Panc1 (cell line): ENCODE measurements at regions of chr3 and their contacts with region 1.

Region 1: DNA sequence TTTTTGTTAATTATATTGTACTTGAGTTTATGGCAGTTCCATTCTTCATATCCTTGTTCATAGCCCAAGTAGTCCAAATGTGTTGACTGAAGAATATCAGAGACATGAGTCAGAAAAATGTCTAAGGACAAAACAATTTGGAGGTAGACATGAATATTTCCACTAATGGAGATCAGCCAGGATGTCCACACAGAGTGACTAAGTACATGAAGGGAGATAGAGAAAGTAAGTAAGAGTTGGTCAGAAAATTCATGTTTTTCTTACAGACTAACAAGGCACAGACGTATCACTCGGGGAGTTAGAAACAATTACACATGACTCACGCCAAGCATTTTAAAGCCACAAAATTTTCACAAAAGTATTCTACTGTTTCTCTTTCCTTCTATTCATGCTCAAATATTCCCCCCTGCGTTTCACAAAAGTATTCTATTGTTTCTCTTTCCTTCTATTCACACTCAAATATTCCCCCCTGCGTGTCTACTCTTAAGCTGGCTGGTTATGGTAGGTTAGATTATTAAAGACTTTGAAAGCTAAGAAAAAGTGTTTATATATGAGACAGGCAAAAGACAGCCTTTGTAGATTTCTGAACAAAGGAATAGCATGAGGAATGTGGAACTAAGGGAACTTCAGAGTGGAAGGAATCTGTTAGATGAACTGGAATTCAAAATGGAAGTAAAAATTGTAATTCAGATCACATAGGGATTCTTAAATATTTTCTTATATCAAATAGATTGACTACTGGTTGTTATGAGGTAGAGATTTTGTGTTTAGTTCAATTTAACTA is 648.7 kb upstream of the CCDC54 start:
- DNase-seq: peak; percentile 72
- ATAC-seq: peak; percentile 87
- H3K4me3 ChIP-seq: no peak overlapping the region
- H3K27ac ChIP-seq: no peak overlapping the region
- H3K4me1 ChIP-seq: no peaks in the 10 kb centered on the region
- H3K27me3 ChIP-seq: no peaks in the 10 kb centered on the region
- CTCF ChIP-seq: no peak

Region 2: DNA sequence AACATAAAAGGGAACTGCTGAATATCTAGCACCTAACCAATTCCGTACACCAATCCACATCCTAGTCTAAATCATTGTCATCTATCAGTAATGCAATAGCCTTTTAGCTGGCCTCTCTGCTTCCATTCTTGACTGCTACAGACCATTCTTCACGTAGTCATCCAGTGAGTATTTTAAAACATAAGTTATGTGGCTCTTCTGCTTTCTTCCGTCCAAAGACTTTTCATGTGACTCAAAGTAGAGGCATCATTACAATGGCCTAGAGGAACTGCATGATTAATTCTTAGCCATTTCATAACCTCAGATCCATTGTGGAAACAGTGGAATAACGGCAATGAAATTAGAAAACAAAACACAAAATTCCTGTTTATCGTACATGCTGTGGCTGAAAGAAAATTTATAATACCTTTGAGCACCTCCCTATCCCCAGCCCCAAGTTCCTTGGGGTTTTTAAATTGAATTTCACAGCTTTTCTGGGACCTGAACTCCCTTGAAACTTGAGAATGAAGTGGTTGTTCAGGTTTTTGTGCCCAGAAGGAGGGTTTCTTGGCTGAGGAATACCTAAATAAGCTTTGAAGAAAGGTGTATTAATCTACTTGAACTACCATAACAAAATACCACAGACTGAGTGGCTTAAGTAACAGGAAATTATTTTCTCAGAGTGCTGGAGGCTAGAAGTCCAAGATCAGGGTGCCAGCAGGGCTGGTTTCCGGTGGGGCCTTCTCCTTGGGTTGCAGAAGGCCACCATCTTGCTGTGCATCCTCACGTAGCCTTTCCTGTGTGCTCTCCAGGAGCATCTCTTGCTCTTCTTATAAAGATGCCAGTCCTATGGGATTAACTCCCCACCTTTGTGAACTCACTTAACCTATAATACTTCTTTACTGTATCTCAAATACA is 770.5 kb before region 1 on chr3:
- CTCF ChIA-PET with region 1: no interaction called
- POLR2A ChIA-PET with region 1: no interaction called
- in situ Hi-C with region 1: no loop called
- intact Hi-C with region 1: no loop called
- DNase-seq: no peak
- ATAC-seq: no peak
- H3K4me3 ChIP-seq: no peak overlapping the region
- H3K27ac ChIP-seq: no peak overlapping the region
- H3K4me1 ChIP-seq: no peaks in the 10 kb centered on the region
- H3K27me3 ChIP-seq: no peaks in the 10 kb centered on the region
- CTCF ChIP-seq: no peak

Region 3: DNA sequence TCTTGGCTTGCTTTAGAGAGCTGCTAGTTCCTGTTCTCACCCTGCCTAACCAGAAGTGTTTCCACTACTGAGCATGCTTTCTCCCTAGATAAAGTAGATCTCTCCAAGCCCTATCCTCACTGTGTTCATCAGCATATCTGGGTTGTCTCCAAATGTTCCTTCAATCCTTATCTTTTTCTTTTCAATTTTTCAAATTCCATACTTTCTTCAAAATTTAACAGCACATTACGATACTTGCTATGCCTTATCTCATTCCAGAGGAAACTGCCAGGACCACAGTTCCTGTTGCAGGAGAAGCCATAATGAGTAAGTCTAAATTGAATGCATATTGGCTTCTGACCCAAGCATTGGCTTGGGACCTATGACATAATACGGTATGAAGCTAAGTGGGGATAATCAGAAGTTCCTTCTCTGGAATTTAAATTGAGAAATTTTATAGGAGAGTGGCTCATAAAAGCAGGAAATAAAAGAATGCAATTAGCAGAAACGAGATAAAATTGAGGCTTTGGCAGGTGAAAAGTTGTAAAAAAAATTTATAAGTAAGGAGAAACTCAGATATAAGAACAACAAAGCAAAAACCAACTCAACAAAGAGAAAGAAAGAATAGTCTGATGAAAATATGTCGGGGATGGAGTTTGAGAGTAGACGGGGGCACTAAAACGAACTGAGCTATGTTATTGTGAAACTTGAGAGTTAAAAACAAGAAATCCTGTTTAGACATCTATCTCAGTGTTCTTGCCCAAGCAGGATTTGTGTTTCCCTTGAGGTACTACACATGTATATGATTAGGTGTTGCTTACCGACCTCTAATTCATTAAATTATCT is 17.0 kb after region 1 on chr3:
- CTCF ChIA-PET with region 1: no interaction called
- POLR2A ChIA-PET with region 1: no interaction called
- in situ Hi-C with region 1: no loop called
- intact Hi-C with region 1: loop called (anchors 1 kb)
- DNase-seq: no peak
- ATAC-seq: no peak
- H3K4me3 ChIP-seq: no peak overlapping the region
- H3K27ac ChIP-seq: no peak overlapping the region
- H3K4me1 ChIP-seq: no peaks in the 10 kb centered on the region
- H3K27me3 ChIP-seq: no peaks in the 10 kb centered on the region
- CTCF ChIP-seq: no peak